ENCODE measurements at regions of chr3 and their contacts with region 1.

Region 1: DNA sequence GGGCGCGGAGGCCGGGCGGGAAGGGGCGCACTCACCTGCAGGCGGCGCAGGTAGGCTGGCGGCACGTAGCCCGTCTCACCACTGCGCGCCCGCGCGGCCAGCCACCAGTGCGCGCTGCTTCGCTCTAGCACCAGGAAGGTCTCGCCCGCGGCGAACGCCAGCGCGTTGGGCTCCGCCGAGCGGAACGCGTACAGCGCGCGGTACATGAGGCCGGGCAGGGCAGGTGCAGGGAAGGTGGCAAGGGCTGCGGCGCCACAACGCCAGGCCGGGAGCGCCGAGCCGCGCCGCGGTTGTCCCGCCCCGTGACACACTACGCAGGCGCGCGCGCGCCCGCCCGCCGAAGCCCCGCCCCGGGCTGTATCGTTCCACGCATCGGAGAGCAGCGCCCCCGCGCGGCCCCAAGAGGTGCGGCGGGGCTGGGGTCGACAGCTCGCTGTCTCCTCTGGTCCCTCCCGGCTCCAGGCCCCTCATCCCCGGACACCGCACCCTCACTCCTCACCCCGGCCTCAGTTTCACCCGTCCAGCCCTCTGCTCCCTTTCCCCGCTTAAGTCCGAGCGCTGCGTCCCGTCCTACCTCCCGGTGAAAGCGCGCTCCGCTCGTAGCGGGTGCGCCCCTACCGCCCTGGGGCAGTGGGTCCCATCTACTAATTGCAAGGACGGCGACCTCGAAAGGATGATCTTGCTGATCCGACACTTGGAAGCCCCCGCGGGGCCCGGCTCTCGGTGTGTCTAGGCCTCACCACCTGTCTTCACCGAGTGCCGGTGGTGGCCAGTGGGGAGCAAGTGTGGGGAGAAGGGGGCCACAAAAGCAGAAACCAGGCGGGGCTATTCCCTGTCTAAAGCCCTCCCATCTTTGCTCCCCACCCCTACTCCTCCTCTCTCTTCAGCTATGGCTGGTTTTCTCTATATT is at the start of gene NCKIPSD:
- DNase-seq: peak; percentile 83 to 96 (median 92)
- ATAC-seq: peak; percentile 97
- H3K4me3 ChIP-seq: peak within 1 kb of the TSS; percentile 92
- H3K4me3 Mint-ChIP-seq: peak within 1 kb of the TSS; percentile 88 to 95 (median 93)
- H3K27ac ChIP-seq: peak within 1 kb of the TSS; percentile 79
- H3K27ac Mint-ChIP-seq: peak within 1 kb of the TSS; percentile 73 to 94 (median 89)
- H3K4me1 ChIP-seq: peaks cover 8 to 18% of the 10 kb centered on the region in 2 donors
- H3K4me1 Mint-ChIP-seq: peaks cover 29 to 38% (median 33%) of the 10 kb centered on the region in 7 donors
- H3K27me3 ChIP-seq: no peaks in the 10 kb centered on the region
- H3K27me3 Mint-ChIP-seq: no peaks in the 10 kb centered on the region
- total RNA-seq, gene NCKIPSD: 13.7 to 42.1 (median 20.3) TPM

Region 2: DNA sequence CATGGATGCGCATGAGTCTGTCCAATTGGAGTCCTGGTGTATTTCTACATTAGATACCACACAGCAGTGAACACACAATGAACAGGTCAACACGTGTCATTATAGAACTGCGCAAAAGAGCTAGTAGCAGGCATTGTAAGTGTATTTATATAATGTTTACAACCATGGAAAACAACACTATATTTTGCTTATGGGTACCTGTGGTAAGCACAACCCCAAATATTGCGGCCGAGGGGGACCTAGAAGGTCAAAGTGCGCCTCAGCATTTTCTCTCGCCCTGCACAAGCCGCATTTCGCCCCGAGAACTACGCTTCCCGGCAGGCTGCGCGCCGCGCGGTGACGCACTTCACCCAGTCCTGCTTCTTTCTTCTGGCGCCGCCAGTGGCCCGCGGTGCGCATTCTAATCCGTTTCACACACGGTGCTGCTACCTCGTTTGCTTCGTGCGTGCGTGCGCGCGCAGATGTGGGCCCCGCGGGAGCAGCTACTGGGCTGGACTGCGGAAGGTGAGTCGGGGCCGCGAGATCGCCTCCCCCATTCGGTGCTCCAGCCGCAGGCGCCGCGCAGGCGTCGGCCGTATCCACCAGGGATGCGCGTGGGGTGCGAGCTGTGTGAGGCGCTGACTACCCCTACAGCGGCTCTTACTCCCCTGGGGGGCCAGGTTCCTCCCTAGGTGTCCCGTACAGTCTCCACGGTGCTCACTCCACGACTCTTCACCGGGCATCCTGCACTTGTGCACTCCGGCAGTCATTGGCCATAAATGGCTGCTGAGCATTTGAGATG is 445.0 kb before region 1 on chr3 and contains the start of gene ZNF589:
- CTCF ChIA-PET with region 1: no interaction called
- POLR2A ChIA-PET with region 1: no interaction called
- intact Hi-C with region 1: loop called in 1 of 2 experiments (anchors 2 kb)
- DNase-seq: peak; percentile 87 to 96 (median 92)
- ATAC-seq: peak; percentile 99
- H3K4me3 ChIP-seq: peak within 1 kb of the TSS; percentile 92
- H3K4me3 Mint-ChIP-seq: peak within 1 kb of the TSS; percentile 82 to 94 (median 92)
- H3K27ac ChIP-seq: peak within 1 kb of the TSS; percentile 79
- H3K27ac Mint-ChIP-seq: peak within 1 kb of the TSS; percentile 88 to 96 (median 93)
- H3K4me1 ChIP-seq: peaks cover 7 to 14% of the 10 kb centered on the region in 2 donors
- H3K4me1 Mint-ChIP-seq: peaks cover 5 to 36% (median 25%) of the 10 kb centered on the region in 7 donors
- H3K27me3 ChIP-seq: no peaks in the 10 kb centered on the region
- H3K27me3 Mint-ChIP-seq: no peaks in the 10 kb centered on the region
- total RNA-seq, gene ZNF589: 37.7 to 64.0 (median 40.2) TPM

Region 3: GRCh38 chr3:48400824-48401433 is 284.9 kb before region 1 on chr3:
- CTCF ChIA-PET with region 1: interaction called, 3 read pairs
- POLR2A ChIA-PET with region 1: no interaction called
- intact Hi-C with region 1: loop called (anchors 1 to 2 kb)
- DNase-seq: peak; percentile 33 to 76 (median 66)
- ATAC-seq: peak; percentile 86
- H3K4me3 ChIP-seq: no peak overlapping the region
- H3K4me3 Mint-ChIP-seq: no peak overlapping the region
- H3K27ac ChIP-seq: no peak overlapping the region
- H3K27ac Mint-ChIP-seq: peak overlapping the region in 1 of 9 donors; percentile 47
- H3K4me1 ChIP-seq: no peaks in the 10 kb centered on the region
- H3K4me1 Mint-ChIP-seq: peaks cover 0 to 3% (median 0%) of the 10 kb centered on the region in 7 donors
- H3K27me3 ChIP-seq: no peaks in the 10 kb centered on the region
- H3K27me3 Mint-ChIP-seq: peaks cover 0 to 7% (median 3%) of the 10 kb centered on the region in 5 donors

Region 4: GRCh38 chr3:48635222-48636021 is 50.4 kb before region 1 on chr3 and contains the start of gene SLC26A6:
- CTCF ChIA-PET with region 1: interaction called, 7 read pairs
- POLR2A ChIA-PET with region 1: no interaction called
- intact Hi-C with region 1: loop called in 1 of 2 experiments (anchors 1 kb)
- DNase-seq: peak; percentile 81 to 98 (median 86)
- ATAC-seq: peak; percentile 98
- H3K4me3 ChIP-seq: peak within 1 kb of the TSS; percentile 76
- H3K4me3 Mint-ChIP-seq: peak within 1 kb of the TSS; percentile 79 to 92 (median 88)
- H3K27ac ChIP-seq: peak within 1 kb of the TSS; percentile 70
- H3K27ac Mint-ChIP-seq: peak within 1 kb of the TSS in 7 of 9 donors; percentile 12 to 84 (median 68)
- H3K4me1 ChIP-seq: peaks cover 0 to 11% of the 10 kb centered on the region in 2 donors
- H3K4me1 Mint-ChIP-seq: peaks cover 4 to 31% (median 22%) of the 10 kb centered on the region in 7 donors
- H3K27me3 ChIP-seq: no peaks in the 10 kb centered on the region
- H3K27me3 Mint-ChIP-seq: no peaks in the 10 kb centered on the region
- total RNA-seq, gene SLC26A6: 15.1 to 37.6 (median 31.2) TPM

Region 5: GRCh38 chr3:48663415-48664312 is 22.2 kb before region 1 on chr3:
- CTCF ChIA-PET with region 1: interaction called, 3 read pairs
- POLR2A ChIA-PET with region 1: no interaction called
- intact Hi-C with region 1: loop called in 1 of 2 experiments (anchors 1 kb)
- DNase-seq: peak; percentile 50 to 94 (median 61)
- ATAC-seq: peak; percentile 88
- H3K4me3 ChIP-seq: peak overlapping the region; percentile 70
- H3K4me3 Mint-ChIP-seq: peak overlapping the region; percentile 34 to 89 (median 70)
- H3K27ac ChIP-seq: no peak overlapping the region
- H3K27ac Mint-ChIP-seq: peak overlapping the region in 1 of 9 donors; percentile 91
- H3K4me1 ChIP-seq: peaks cover 12 to 15% of the 10 kb centered on the region in 2 donors
- H3K4me1 Mint-ChIP-seq: peaks cover 0 to 29% (median 15%) of the 10 kb centered on the region in 7 donors
- H3K27me3 ChIP-seq: peaks cover 0 to 15% of the 10 kb centered on the region in 2 donors
- H3K27me3 Mint-ChIP-seq: peaks cover 4 to 20% (median 13%) of the 10 kb centered on the region in 5 donors

Region 6: GRCh38 chr3:48847504-48848423 is 161.9 kb after region 1 on chr3 and contains the start of gene PRKAR2A:
- CTCF ChIA-PET with region 1: no interaction called
- POLR2A ChIA-PET with region 1: no interaction called
- intact Hi-C with region 1: loop called in 1 of 2 experiments (anchors 1 kb)
- DNase-seq: peak; percentile 51 to 87 (median 67)
- ATAC-seq: peak; percentile 92
- H3K4me3 ChIP-seq: peak within 1 kb of the TSS; percentile 70
- H3K4me3 Mint-ChIP-seq: peak within 1 kb of the TSS; percentile 86 to 93 (median 90)
- H3K27ac ChIP-seq: peak within 1 kb of the TSS; percentile 79
- H3K27ac Mint-ChIP-seq: peak within 1 kb of the TSS; percentile 81 to 98 (median 94)
- H3K4me1 ChIP-seq: peaks cover 15 to 21% of the 10 kb centered on the region in 2 donors
- H3K4me1 Mint-ChIP-seq: peaks cover 12 to 34% (median 28%) of the 10 kb centered on the region in 7 donors
- H3K27me3 ChIP-seq: no peaks in the 10 kb centered on the region
- H3K27me3 Mint-ChIP-seq: no peaks in the 10 kb centered on the region
- total RNA-seq, gene PRKAR2A: 25.9 to 45.1 (median 38.9) TPM

Region 7: GRCh38 chr3:48952510-48953118 is 266.8 kb after region 1 on chr3:
- CTCF ChIA-PET with region 1: interaction called, 4 read pairs
- POLR2A ChIA-PET with region 1: no interaction called
- intact Hi-C with region 1: loop called in 1 of 2 experiments (anchors 1 kb)
- DNase-seq: peak; percentile 21 to 52 (median 33)
- ATAC-seq: peak; percentile 79
- H3K4me3 ChIP-seq: no peak overlapping the region
- H3K4me3 Mint-ChIP-seq: no peak overlapping the region
- H3K27ac ChIP-seq: no peak overlapping the region
- H3K27ac Mint-ChIP-seq: peak overlapping the region in 3 of 9 donors; percentile 2 to 33 (median 13)
- H3K4me1 ChIP-seq: no peaks in the 10 kb centered on the region
- H3K4me1 Mint-ChIP-seq: peaks cover 13 to 35% (median 17%) of the 10 kb centered on the region in 7 donors
- H3K27me3 ChIP-seq: no peaks in the 10 kb centered on the region
- H3K27me3 Mint-ChIP-seq: no peaks in the 10 kb centered on the region

Measured in naive thymus-derived CD4-positive, alpha-beta T cell (primary cell).